ENCODE measurements at regions of chr18 and their contacts with region 1.

Region 1: GRCh38 chr18:3062798-3063680 is 50.1 kb upstream of the LPIN2 start:
- DNase-seq: peak; percentile 88
- ATAC-seq: peak; percentile 45
- H3K4me3 Mint-ChIP-seq: peak overlapping the region; percentile 62
- H3K27ac Mint-ChIP-seq: peak overlapping the region; percentile 100
- H3K4me1 Mint-ChIP-seq: peaks cover 72% of the 10 kb centered on the region
- H3K27me3 Mint-ChIP-seq: no peaks in the 10 kb centered on the region

Region 2: GRCh38 chr18:2985628-2986027 is 77.4 kb before region 1 on chr18:
- CTCF ChIA-PET with region 1: interaction called, 50 read pairs
- DNase-seq: no peak
- ATAC-seq: no peak
- H3K4me3 Mint-ChIP-seq: no peak overlapping the region
- H3K27ac Mint-ChIP-seq: peak overlapping the region; percentile 11
- H3K4me1 Mint-ChIP-seq: peaks cover 74% of the 10 kb centered on the region
- H3K27me3 Mint-ChIP-seq: no peaks in the 10 kb centered on the region

Region 3: DNA sequence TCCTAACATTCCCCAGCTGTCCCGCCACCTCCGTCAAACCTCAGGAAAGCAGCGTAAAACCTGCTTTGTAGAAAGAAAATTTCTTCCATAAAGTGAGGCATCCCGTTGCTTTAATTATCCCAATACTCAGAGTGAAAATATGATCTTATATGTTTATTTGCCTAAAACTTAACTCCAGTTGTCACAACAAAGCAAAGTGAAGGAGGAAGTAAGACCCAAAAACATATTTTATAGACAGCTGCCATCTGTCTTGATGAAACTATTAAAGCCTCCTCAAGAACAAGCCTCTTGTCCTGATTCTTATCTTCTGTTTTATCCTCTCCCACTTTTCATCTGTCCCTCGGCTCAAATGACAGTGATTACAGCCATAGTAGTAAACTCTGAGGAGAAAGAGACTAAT is 21.2 kb before region 1 on chr18:
- CTCF ChIA-PET with region 1: interaction called, 11 read pairs
- DNase-seq: no peak
- ATAC-seq: no peak
- H3K4me3 Mint-ChIP-seq: no peak overlapping the region
- H3K27ac Mint-ChIP-seq: no peak overlapping the region
- H3K4me1 Mint-ChIP-seq: peaks cover 33% of the 10 kb centered on the region
- H3K27me3 Mint-ChIP-seq: no peaks in the 10 kb centered on the region

Region 4: GRCh38 chr18:3074087-3074486 is 11.0 kb after region 1 on chr18:
- CTCF ChIA-PET with region 1: interaction called, 56 read pairs
- DNase-seq: peak; percentile 37
- ATAC-seq: no peak
- H3K4me3 Mint-ChIP-seq: no peak overlapping the region
- H3K27ac Mint-ChIP-seq: no peak overlapping the region
- H3K4me1 Mint-ChIP-seq: peaks cover 19% of the 10 kb centered on the region
- H3K27me3 Mint-ChIP-seq: no peaks in the 10 kb centered on the region

Region 5: GRCh38 chr18:3129053-3129864 is 66.2 kb after region 1 on chr18:
- CTCF ChIA-PET with region 1: interaction called, 26 read pairs
- DNase-seq: peak; percentile 87
- ATAC-seq: peak; percentile 97
- H3K4me3 Mint-ChIP-seq: no peak overlapping the region
- H3K27ac Mint-ChIP-seq: no peak overlapping the region
- H3K4me1 Mint-ChIP-seq: peaks cover 12% of the 10 kb centered on the region
- H3K27me3 Mint-ChIP-seq: no peaks in the 10 kb centered on the region

Region 6: DNA sequence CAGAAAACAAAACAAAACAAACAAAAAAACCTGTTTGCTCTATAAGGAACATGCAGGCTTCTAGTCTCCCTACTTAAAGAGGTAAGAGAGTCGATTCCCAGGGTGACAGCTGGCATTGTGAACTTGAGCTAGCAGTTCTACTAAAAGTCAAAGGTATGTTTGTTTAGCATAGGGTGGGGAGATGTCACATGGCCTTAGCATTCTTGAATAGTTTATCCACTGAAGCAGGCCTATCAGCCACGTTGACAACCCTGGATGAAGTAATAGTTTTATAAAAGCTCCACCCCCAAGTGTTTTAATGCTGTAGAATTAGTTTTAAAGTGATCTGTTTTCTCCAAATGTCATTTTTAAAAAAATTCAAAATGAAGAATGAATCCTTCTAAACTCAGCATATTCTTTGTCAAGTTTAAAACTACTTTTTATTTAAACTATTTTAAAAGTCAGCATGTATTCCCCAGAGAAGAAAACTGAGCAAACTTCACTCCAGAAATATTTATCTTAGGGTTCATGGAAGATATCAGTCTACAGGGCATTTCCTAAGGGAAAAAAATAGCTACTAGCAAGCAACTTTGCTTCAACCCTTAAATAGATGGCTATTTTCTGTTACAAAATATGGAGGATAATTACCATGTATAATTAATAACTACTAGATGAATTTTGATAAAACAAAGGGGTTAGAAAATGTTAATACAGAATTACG is 155.1 kb after region 1 on chr18:
- CTCF ChIA-PET with region 1: no interaction called
- DNase-seq: no peak
- ATAC-seq: no peak
- H3K4me3 Mint-ChIP-seq: no peak overlapping the region
- H3K27ac Mint-ChIP-seq: no peak overlapping the region
- H3K4me1 Mint-ChIP-seq: peaks cover 8% of the 10 kb centered on the region
- H3K27me3 Mint-ChIP-seq: no peaks in the 10 kb centered on the region